Ascending aorta (tissue), 2 donors: ENCODE measurements at regions of chr1 and their contacts with region 1.

Region 1: DNA sequence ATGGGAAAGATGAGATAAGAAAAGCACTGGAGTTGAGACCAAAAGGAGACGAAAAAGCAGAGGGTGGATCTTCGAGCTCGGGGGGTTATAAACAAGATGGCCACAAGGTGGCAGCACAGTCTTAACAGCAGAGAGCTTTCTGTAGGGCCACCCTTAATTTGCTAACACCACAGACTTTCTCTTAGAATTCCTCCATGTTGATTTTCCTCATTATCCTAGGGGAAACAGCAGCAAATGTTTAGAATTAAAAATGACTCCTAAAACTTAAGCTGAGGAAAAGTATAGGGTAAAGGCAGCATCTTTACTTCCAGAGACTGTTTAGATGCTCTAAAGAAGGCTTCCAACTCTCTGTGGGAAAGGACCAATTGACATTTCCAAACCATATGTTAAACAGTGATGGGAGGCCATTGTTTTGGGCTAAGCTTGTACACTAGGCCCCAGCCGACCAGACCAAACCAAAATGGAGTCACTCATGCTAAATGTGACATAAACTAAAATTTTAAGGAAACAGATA is 2.5 kb upstream of the APOBEC4 start:
- DNase-seq: peak; percentile 20 to 89
- H3K4me3 ChIP-seq: no peak overlapping the region
- H3K27ac ChIP-seq: no peak overlapping the region
- H3K4me1 ChIP-seq: peaks cover 0 to 2% of the 10 kb centered on the region in 2 donors
- H3K27me3 ChIP-seq: no peaks in the 10 kb centered on the region
- CTCF ChIP-seq: peak; percentile 74 to 84 (median 83)

Region 2: GRCh38 chr1:183590244-183591191 is 65.1 kb before region 1 on chr1 and contains the start of gene NCF2:
- intact Hi-C with region 1: no loop called
- DNase-seq: peak in 1 of 2 donors; percentile 64
- H3K4me3 ChIP-seq: peak within 1 kb of the TSS in 1 of 2 donors; percentile 16
- H3K27ac ChIP-seq: peak within 1 kb of the TSS in 1 of 2 donors; percentile 8
- H3K4me1 ChIP-seq: no peaks in the 10 kb centered on the region
- H3K27me3 ChIP-seq: no peaks in the 10 kb centered on the region
- CTCF ChIP-seq: no peak
- total RNA-seq, gene NCF2: 9.8 TPM

Region 3: DNA sequence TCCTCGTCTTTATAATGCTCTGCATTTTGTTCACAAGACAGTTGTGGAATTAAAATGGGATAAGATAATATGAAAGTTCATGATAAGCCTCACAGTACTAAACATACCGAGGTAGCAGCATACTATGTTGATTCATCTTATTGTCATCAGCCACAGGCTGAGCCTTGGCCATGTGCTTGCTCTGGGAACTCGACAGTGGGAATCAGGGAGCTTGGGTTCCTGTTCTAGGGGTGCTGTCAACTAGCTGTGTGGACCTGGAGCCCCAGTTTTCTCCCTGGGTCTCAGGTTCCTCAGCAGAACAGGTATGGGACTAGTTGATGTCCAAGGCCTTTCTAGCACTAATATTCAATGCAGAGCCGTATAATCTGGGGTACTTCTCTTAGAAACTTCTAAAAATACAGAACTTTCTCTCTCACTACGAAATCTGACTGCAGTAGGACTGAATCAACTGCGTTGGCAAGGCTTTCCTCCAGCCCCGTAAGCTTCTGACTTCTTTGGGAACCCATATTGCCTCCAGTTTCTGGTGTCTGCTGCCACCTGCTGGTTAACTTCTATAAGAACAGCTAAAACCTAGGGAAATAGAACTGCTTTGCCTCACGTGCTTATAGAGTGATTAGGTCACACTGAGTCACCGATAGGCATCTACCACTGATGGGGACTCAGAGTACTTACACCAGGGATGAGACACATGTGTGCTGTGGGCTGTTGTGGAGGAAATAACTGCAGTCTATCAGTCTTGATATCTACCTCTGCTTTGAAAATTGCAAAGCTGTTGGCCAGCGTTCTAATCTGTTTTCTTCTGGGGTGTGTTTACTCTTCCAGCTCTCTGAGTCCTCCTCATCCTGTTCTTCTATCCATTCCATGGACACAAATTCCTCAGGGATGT is 260.2 kb after region 1 on chr1:
- intact Hi-C with region 1: loop called (anchors 1 kb)
- DNase-seq: peak; percentile 30 to 85
- H3K4me3 ChIP-seq: peak overlapping the region in 1 of 2 donors; percentile 24
- H3K27ac ChIP-seq: peak overlapping the region; percentile 30 to 35
- H3K4me1 ChIP-seq: peaks cover 0 to 4% of the 10 kb centered on the region in 2 donors
- H3K27me3 ChIP-seq: no peaks in the 10 kb centered on the region
- CTCF ChIP-seq: peak; percentile 82 to 90 (median 86)

Region 4: GRCh38 chr1:185050823-185051451 is 1395.3 kb after region 1 on chr1:
- intact Hi-C with region 1: no loop called
- DNase-seq: no peak
- H3K4me3 ChIP-seq: no peak overlapping the region
- H3K27ac ChIP-seq: no peak overlapping the region
- H3K4me1 ChIP-seq: peaks cover 0 to 15% of the 10 kb centered on the region in 2 donors
- H3K27me3 ChIP-seq: no peaks in the 10 kb centered on the region
- CTCF ChIP-seq: no peak